Heart right ventricle (tissue), 16 donors: ENCODE measurements at regions of chr17 and their contacts with region 1.

Region 1: DNA sequence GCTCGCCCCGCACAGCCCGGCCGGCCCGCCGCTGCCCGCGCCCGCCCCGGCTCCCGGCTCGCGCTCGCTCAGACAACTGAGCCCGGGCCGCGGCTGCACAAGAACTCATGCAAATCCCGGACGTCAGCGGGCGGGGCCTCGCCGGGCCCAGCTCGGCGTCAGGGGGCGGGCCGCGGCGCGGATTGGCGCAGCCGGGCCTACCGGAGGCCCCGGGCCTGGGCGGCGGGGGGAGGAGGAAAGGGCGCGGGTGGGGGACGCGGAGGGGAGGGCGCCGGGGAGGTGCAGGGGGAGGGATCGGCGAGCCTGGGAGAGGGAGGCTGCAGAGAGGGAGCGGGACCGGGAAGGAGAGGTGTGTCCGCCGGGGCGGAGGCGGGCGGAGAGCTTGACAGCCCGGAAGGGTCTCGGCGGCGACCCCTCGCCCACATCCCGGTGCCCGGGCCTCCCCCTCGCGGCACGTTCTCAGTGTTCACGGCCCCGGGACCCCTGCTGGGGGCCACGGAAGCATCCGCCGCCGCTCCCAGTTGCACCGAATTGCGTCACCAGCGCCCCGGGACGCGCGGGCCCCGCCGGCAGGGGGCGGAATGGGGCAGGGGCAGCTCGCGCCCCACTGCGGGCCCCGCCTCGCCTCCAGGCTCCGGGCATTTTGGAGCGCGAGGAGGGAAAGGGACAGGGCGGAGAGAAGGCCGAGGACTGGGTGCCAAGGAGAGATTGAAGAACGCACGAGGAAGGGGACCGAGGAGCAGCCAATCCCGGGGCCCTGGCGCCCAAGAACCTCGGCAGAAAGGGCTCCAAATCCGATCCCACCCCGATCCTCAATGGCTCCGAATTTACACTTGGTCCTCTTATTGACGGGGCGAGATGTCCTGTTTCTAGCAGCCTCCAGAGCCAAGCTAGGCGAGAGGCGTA is at the start of gene CBX4:
- DNase-seq: peak; percentile 94 to 96
- ATAC-seq: peak; percentile 73 to 88 (median 81)
- H3K4me3 ChIP-seq: peak within 1 kb of the TSS; percentile 53 to 99 (median 83)
- H3K27ac ChIP-seq: peak within 1 kb of the TSS; percentile 87 to 97 (median 92)
- H3K4me1 ChIP-seq: peaks cover 38 to 76% (median 72%) of the 10 kb centered on the region in 9 donors
- H3K27me3 ChIP-seq: peaks cover 20 to 51% (median 40%) of the 10 kb centered on the region in 7 donors
- CTCF ChIP-seq: peak; percentile 53 to 77 (median 70)
- total RNA-seq, gene CBX4: 21.6 to 38.2 (median 26.4) TPM

Region 2: DNA sequence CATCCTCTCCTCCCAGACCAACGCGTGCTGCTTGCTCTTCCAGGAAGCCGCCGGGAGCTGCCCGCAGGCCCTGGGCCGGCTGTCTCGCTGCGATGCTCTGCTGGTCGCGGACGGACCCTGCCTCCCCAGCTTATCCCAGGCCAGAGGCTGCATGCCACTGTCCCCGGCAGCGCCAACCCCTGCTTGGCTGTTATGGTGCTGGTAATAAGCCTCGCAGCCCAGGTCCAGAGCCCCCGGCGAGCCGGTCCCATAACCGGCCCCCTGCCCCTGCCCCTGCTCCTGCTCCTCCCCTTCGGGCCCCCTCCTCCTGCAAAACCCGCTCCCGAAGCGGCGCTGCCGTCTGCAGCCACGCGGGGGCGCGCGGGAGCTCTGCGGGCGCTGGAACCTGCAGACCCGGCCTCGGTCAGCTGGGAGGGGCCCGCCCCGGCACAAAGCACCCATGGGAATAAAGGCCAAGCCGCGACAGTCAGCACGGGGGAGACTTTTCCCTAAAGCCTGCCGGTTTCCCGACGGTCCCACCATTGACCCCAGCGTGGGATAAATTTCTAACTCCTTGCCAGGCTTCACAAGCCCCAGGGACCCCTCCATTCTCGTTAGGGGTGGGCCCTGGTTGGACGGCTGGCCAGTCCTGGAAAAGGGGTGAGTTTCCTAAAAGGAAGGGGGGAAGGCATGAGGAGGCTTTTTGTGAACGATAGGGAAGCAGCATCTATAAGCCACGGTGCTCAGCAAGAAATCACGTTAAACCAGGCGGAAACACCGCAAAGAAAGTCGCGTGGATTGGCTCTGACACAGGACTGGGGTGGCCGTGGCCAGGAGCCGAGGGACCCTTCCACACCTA is 97.6 kb before region 1 on chr17:
- intact Hi-C with region 1: loop called in 3 of 10 experiments (anchors 10 kb)
- DNase-seq: peak; percentile 68 to 80
- ATAC-seq: peak; percentile 56 to 76 (median 71)
- H3K4me3 ChIP-seq: peak overlapping the region in 5 of 10 donors; percentile 11 to 31 (median 17)
- H3K27ac ChIP-seq: no peak overlapping the region
- H3K4me1 ChIP-seq: peaks cover 3 to 20% (median 8%) of the 10 kb centered on the region in 9 donors
- H3K27me3 ChIP-seq: peaks cover 20 to 82% (median 72%) of the 10 kb centered on the region in 7 donors
- CTCF ChIP-seq: peak; percentile 90 to 98 (median 95)

Region 3: GRCh38 chr17:79777894-79778503 is 61.6 kb before region 1 on chr17 and contains the start of gene CBX2:
- intact Hi-C with region 1: no loop called
- DNase-seq: peak; percentile 78 to 88
- ATAC-seq: peak; percentile 38 to 82 (median 70)
- H3K4me3 ChIP-seq: peak within 1 kb of the TSS; percentile 63 to 87 (median 77)
- H3K27ac ChIP-seq: peak within 1 kb of the TSS; percentile 2 to 85 (median 77)
- H3K4me1 ChIP-seq: peaks cover 0 to 48% (median 21%) of the 10 kb centered on the region in 9 donors
- H3K27me3 ChIP-seq: peaks cover 0 to 79% (median 38%) of the 10 kb centered on the region in 7 donors
- CTCF ChIP-seq: no peak
- total RNA-seq, gene CBX2: 1.5 to 3.9 (median 2.7) TPM

Region 4: GRCh38 chr17:79796763-79797491 is 42.7 kb before region 1 on chr17 and contains the start of gene CBX8:
- intact Hi-C with region 1: loop called in 9 of 10 experiments (anchors 5 kb)
- DNase-seq: peak; percentile 100
- ATAC-seq: peak; percentile 92 to 99 (median 97)
- H3K4me3 ChIP-seq: peak within 1 kb of the TSS; percentile 51 to 81 (median 76)
- H3K27ac ChIP-seq: peak within 1 kb of the TSS; percentile 76 to 92 (median 85)
- H3K4me1 ChIP-seq: peaks cover 35 to 72% (median 52%) of the 10 kb centered on the region in 9 donors
- H3K27me3 ChIP-seq: peaks cover 42 to 73% (median 65%) of the 10 kb centered on the region in 7 donors
- CTCF ChIP-seq: peak in 6 of 9 donors; percentile 18 to 56 (median 39)
- total RNA-seq, gene CBX8: 4.3 to 9.3 (median 5.6) TPM

Region 5: DNA sequence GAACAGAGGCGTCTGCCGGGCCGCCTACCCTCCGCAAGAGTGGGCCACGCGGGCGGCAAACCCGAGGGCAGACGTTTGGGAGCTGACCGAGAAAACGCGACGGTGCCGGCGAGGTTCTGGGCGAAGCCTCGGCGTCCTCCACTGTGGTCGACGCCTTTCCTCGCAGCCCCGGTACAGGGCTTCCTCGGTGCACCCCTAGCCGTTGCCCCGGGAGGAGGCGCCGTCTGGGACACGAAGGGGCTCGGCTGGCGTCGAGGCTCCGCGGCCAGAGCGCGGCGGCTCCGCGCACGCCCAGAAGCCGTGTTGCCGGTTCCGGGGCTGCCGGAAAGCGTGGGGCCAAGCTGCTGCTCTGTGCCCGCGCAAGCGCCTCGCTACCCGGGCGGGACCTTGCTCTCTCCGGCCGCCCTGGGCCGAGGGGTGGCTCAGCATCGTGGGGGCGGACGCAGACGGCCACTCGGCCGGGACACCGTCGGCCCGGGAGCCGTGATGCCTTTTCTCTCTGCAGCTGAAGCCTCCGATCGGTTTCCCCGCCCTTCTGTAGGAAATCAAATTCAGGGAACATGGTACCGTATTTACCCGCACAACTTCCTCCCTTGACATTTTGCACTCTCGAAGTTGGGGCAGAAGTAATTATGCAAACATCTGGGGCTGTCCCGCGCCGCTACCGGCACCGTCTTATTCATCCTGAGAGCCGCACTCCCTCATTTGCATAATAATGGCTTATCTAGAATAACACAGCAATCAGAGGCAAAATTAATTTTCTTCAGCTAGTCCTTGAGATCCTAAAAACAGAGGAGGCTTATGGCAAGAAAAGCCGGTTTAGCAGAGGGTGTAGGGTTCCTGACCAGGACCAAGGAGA is 35.4 kb before region 1 on chr17:
- intact Hi-C with region 1: loop called (anchors 5 kb)
- DNase-seq: no peak
- ATAC-seq: no peak
- H3K4me3 ChIP-seq: peak overlapping the region in 3 of 10 donors; percentile 0 to 40 (median 26)
- H3K27ac ChIP-seq: peak overlapping the region in 1 of 10 donors; percentile 62
- H3K4me1 ChIP-seq: peaks cover 10 to 60% (median 44%) of the 10 kb centered on the region in 9 donors
- H3K27me3 ChIP-seq: peaks cover 81 to 100% (median 99%) of the 10 kb centered on the region in 7 donors
- CTCF ChIP-seq: peak in 1 of 9 donors; percentile 3

Region 6: DNA sequence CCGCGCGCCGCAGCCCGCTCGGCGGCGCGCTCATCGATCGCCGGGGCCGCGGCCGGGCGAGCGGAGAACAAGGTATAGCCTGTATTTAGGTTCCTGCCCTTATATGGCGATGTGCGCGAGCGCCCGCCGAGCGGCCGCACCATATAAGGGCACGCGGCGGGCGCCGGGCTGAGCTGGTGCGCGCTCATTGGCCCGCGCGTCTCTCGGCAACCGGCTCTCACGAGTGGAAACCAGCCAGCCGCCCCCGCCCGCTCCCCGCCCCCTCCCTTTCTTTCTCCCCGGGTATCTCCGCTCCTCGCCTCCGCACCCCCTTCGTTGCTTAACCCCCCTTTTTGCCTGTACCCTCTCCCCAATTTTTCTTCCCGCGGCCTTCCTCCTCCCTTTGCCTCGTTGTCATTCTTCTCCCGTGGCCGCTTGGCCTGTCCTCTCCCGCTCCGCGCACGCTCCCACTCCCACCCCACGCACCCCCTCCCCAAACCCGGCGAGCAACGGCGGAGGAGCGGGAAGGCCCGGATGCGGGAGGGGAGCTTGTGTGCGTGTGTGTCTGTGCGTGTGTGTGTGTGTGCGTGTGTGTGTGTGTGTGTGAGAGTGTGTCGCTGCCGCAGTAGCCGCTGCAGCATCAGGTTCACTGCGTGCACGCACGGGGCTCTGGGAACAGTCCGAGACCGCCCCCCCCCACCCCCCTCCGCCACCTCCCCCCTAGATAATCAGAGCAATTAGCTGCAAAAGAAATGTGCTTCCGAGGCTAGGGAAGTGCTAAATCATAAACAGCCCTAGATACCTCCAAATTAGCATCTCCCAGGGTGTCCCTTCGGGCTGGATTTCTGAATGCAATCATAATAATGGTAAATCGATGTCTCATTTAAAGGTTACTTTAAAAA is 29.2 kb before region 1 on chr17:
- intact Hi-C with region 1: loop called in 3 of 10 experiments (anchors 2 to 5 kb)
- DNase-seq: peak; percentile 60 to 73
- ATAC-seq: peak; percentile 66 to 88 (median 78)
- H3K4me3 ChIP-seq: peak overlapping the region in 9 of 10 donors; percentile 5 to 39 (median 31)
- H3K27ac ChIP-seq: no peak overlapping the region
- H3K4me1 ChIP-seq: peaks cover 20 to 61% (median 43%) of the 10 kb centered on the region in 9 donors
- H3K27me3 ChIP-seq: peaks cover 48 to 96% (median 93%) of the 10 kb centered on the region in 7 donors
- CTCF ChIP-seq: no peak

Region 7: DNA sequence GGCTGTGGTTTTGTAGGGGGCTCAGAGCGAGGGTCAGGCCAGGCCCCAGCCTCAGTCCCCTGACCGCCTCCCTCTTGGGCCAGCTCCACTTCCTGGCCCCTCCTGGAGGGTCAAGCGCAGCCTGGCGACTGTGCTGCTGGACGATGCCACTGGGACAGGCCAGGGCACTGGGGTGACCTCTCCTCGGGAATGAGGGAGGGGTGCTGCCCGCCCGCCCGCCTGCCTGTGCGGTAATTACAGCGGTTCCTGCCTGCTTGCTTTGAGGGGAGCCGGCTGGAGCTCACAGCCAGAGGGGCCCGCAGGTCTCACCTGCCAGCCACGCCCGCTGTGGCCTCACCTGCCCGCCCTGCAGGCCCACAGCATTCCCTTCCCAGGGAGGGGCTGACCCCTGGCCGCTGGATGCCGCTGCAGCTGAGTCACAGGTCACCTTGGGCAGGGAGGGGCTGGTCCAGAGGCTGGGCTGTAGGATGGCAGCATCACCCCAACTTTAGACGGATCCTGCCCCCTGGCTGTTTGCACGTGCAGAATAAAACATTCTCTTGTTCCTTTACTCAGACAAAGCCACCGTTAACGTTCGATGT is 76.3 kb after region 1 on chr17:
- intact Hi-C with region 1: loop called in 2 of 10 experiments (anchors 5 to 10 kb)
- DNase-seq: peak; percentile 33 to 52
- ATAC-seq: peak in 5 of 8 donors; percentile 24 to 54 (median 39)
- H3K4me3 ChIP-seq: no peak overlapping the region
- H3K27ac ChIP-seq: no peak overlapping the region
- H3K4me1 ChIP-seq: peaks cover 0 to 37% (median 14%) of the 10 kb centered on the region in 9 donors
- H3K27me3 ChIP-seq: peaks cover 0 to 48% (median 32%) of the 10 kb centered on the region in 7 donors
- CTCF ChIP-seq: peak in 7 of 9 donors; percentile 32 to 56 (median 52)